ENCODE measurements at regions of chr4 and their contacts with region 1.

Region 1: GRCh38 chr4:121370729-121371325 is 10.0 kb downstream of the QRFPR start:
- DNase-seq: peak; percentile 40
- ATAC-seq: peak; percentile 74
- H3K4me3 ChIP-seq: no peak overlapping the region
- H3K27ac ChIP-seq: no peak overlapping the region
- H3K4me1 ChIP-seq: peaks cover under 1 to 10% of the 10 kb centered on the region in 2 experiments; a peak in 3 of 4 replicates
- H3K27me3 ChIP-seq: no peaks in the 10 kb centered on the region
- CTCF ChIP-seq: peak; percentile 55 to 82 (median 64); a peak in 5 of 6 replicates
- POLR2A ChIP-seq: no peak
- RAD21 ChIP-seq: peak; percentile 71

Region 2: DNA sequence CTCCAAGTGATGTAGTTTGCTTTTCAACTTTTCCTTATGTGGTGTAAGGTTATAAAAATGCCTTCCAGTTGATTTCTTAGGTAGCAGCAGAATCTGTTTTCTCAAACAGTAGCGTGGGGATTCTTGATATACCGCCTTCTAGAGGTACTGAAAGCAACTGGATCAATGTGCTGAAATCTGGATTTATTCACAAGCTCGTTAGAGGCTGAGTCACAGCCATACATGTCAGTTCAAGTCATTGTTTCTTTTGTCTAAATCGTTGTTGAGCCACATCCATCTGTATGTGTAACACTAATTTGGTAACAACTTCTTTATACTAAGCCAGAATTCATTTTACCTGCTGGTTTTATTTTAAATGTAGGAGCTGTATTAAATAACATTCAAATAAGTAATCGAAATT is 1104.2 kb before region 1 on chr4:
- CTCF ChIA-PET with region 1: no interaction called
- POLR2A ChIA-PET with region 1: no interaction called
- RAD21 ChIA-PET with region 1: no interaction called
- intact Hi-C with region 1: no loop called
- DNase-seq: no peak
- ATAC-seq: no peak
- H3K4me3 ChIP-seq: no peak overlapping the region
- H3K27ac ChIP-seq: no peak overlapping the region
- H3K4me1 ChIP-seq: no peaks in the 10 kb centered on the region
- H3K27me3 ChIP-seq: no peaks in the 10 kb centered on the region
- CTCF ChIP-seq: no peak; a peak in 1 of 6 replicates
- POLR2A ChIP-seq: no peak
- RAD21 ChIP-seq: no peak

Region 3: DNA sequence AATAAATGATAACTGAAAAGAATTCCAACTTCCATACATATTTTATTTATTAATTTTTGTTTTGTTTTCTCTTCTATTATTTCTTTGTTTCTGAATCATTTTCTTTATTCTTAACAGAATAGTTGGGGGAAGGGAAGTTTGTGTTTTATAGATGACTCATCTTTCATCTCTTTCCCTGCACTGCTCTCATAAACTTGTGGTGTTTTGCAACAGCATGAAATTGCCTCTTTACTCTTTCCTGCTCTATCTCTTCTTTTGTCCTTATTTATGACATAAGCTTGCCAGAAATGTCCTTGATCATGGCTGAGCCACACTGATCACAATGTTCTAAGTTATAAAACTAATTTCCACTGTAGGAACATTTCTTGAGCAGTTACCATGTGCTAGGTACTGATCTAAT is 12.4 kb before region 1 on chr4:
- CTCF ChIA-PET with region 1: interaction called, 37 read pairs
- POLR2A ChIA-PET with region 1: interaction called, 4 read pairs
- RAD21 ChIA-PET with region 1: no interaction called
- intact Hi-C with region 1: no loop called
- DNase-seq: peak; percentile 7
- ATAC-seq: no peak; the same call in 1 of the 2 replicates
- H3K4me3 ChIP-seq: no peak overlapping the region
- H3K27ac ChIP-seq: no peak overlapping the region
- H3K4me1 ChIP-seq: peaks cover 2 to 6% of the 10 kb centered on the region in 2 experiments; a peak in 3 of 4 replicates
- H3K27me3 ChIP-seq: no peaks in the 10 kb centered on the region
- CTCF ChIP-seq: no peak
- POLR2A ChIP-seq: no peak
- RAD21 ChIP-seq: no peak

Region 4: DNA sequence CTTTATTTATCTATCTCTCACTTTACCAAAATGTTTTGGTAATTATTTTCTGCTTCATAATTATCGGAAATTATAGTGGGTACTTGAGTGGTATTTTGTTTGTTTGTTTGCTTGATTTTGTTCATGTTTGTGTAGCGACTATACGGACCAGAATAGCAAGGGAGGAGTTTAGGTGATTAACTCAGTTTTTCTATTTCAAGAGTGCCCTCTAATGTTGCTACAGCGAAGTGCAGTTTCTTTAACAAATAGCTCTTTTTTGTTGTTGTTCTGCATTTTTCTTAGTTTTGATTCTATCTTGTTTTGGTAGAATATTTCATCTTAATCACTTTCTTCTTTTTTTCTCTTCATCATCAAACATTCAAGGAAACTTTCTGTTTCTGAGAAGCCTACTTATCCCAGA is 50.8 kb after region 1 on chr4:
- CTCF ChIA-PET with region 1: interaction called, 28 read pairs
- POLR2A ChIA-PET with region 1: no interaction called
- RAD21 ChIA-PET with region 1: interaction called in 1 of 2 experiments, 4 read pairs
- intact Hi-C with region 1: loop called (anchors 2 kb)
- DNase-seq: peak; percentile 13
- ATAC-seq: no peak
- H3K4me3 ChIP-seq: no peak overlapping the region
- H3K27ac ChIP-seq: no peak overlapping the region
- H3K4me1 ChIP-seq: no peaks in the 10 kb centered on the region
- H3K27me3 ChIP-seq: no peaks in the 10 kb centered on the region
- CTCF ChIP-seq: peak; percentile 54 to 76 (median 59); a peak in 5 of 6 replicates
- POLR2A ChIP-seq: no peak
- RAD21 ChIP-seq: peak; percentile 71

Region 5: GRCh38 chr4:121472937-121473721 is 102.3 kb after region 1 on chr4:
- CTCF ChIA-PET with region 1: no interaction called
- POLR2A ChIA-PET with region 1: no interaction called
- RAD21 ChIA-PET with region 1: no interaction called
- intact Hi-C with region 1: no loop called
- DNase-seq: no peak
- ATAC-seq: no peak
- H3K4me3 ChIP-seq: no peak overlapping the region
- H3K27ac ChIP-seq: no peak overlapping the region
- H3K4me1 ChIP-seq: no peaks in the 10 kb centered on the region
- H3K27me3 ChIP-seq: no peaks in the 10 kb centered on the region
- CTCF ChIP-seq: no peak
- POLR2A ChIP-seq: no peak
- RAD21 ChIP-seq: no peak

Measured in HCT116 (cell line).